ENCODE measurements at regions of chr4 and their contacts with region 1.

Region 1: GRCh38 chr4:158253350-158253980 is 43.2 kb downstream of the TMEM144 start:
- DNase-seq: peak in 7 of 9 donors; percentile 2 to 51 (median 26)
- ATAC-seq: peak; percentile 73
- H3K4me3 ChIP-seq: no peak overlapping the region
- H3K4me3 Mint-ChIP-seq: peak overlapping the region in 1 of 10 donors; percentile 19
- H3K27ac ChIP-seq: no peak overlapping the region
- H3K27ac Mint-ChIP-seq: no peak overlapping the region
- H3K4me1 ChIP-seq: no peaks in the 10 kb centered on the region
- H3K4me1 Mint-ChIP-seq: peaks cover 3 to 14% (median 12%) of the 10 kb centered on the region in 7 donors
- H3K27me3 ChIP-seq: peaks cover 0 to 5% of the 10 kb centered on the region in 2 donors
- H3K27me3 Mint-ChIP-seq: peaks cover 0 to 13% (median 9%) of the 10 kb centered on the region in 5 donors

Region 2: DNA sequence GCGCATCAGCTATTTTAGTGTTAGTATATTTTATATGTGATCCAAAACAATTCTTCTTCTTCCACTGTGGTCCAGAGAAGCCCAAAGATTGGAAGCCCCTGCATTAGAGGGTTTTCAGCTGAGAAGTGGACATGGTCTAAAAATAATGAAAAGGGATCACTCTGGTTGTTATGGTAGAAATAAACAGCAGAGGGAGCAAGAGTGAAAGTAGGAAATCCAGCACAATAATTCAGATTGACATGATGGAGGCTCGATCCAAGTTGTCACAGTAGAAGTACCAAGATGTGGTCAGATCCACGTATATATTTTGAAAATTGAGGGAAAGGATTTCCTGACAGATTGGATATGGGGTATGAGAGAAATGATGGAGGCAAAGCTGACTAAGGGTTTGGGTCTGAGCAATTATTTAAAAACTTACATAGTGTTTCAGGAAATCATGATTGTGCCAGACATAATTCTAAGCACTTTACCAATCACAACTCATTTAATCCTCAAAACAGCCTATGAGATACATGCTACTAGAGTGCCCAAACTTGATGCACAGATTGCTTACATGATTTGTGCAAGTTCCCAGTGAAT is 60.2 kb before region 1 on chr4:
- CTCF ChIA-PET with region 1: interaction called, 3 read pairs
- POLR2A ChIA-PET with region 1: no interaction called
- intact Hi-C with region 1: loop called (anchors 1 to 5 kb)
- DNase-seq: no peak
- ATAC-seq: peak; percentile 51
- H3K4me3 ChIP-seq: no peak overlapping the region
- H3K4me3 Mint-ChIP-seq: peak overlapping the region in 2 of 10 donors; percentile 6 to 32
- H3K27ac ChIP-seq: no peak overlapping the region
- H3K27ac Mint-ChIP-seq: no peak overlapping the region
- H3K4me1 ChIP-seq: no peaks in the 10 kb centered on the region
- H3K4me1 Mint-ChIP-seq: peaks cover 0 to 2% (median 0%) of the 10 kb centered on the region in 7 donors
- H3K27me3 ChIP-seq: no peaks in the 10 kb centered on the region
- H3K27me3 Mint-ChIP-seq: peaks cover 0 to 6% (median 3%) of the 10 kb centered on the region in 5 donors

Region 3: GRCh38 chr4:158691750-158692149 is 438.3 kb after region 1 on chr4:
- CTCF ChIA-PET with region 1: no interaction called
- POLR2A ChIA-PET with region 1: no interaction called
- intact Hi-C with region 1: no loop called
- DNase-seq: no peak
- ATAC-seq: no peak
- H3K4me3 ChIP-seq: no peak overlapping the region
- H3K4me3 Mint-ChIP-seq: no peak overlapping the region
- H3K27ac ChIP-seq: no peak overlapping the region
- H3K27ac Mint-ChIP-seq: no peak overlapping the region
- H3K4me1 ChIP-seq: no peaks in the 10 kb centered on the region
- H3K4me1 Mint-ChIP-seq: no peaks in the 10 kb centered on the region
- H3K27me3 ChIP-seq: no peaks in the 10 kb centered on the region
- H3K27me3 Mint-ChIP-seq: no peaks in the 10 kb centered on the region